ENCODE measurements at regions of chr1 and their contacts with region 1.

Region 1: GRCh38 chr1:165928075-165928731 is 100.8 kb downstream of the UCK2 start:
- DNase-seq: peak; percentile 82
- H3K4me3 Mint-ChIP-seq: no peak overlapping the region
- H3K27ac Mint-ChIP-seq: no peak overlapping the region
- H3K4me1 Mint-ChIP-seq: no peaks in the 10 kb centered on the region
- H3K27me3 Mint-ChIP-seq: no peaks in the 10 kb centered on the region
- CTCF ChIP-seq: peak; percentile 78

Region 2: GRCh38 chr1:165717918-165718515 is 210.2 kb before region 1 on chr1:
- CTCF ChIA-PET with region 1: interaction called, 19 read pairs
- POLR2A ChIA-PET with region 1: no interaction called
- intact Hi-C with region 1: no loop called
- DNase-seq: peak; percentile 80
- H3K4me3 Mint-ChIP-seq: no peak overlapping the region
- H3K27ac Mint-ChIP-seq: no peak overlapping the region
- H3K4me1 Mint-ChIP-seq: no peaks in the 10 kb centered on the region
- H3K27me3 Mint-ChIP-seq: no peaks in the 10 kb centered on the region
- CTCF ChIP-seq: peak; percentile 87

Region 3: GRCh38 chr1:165875171-165875570 is 53.0 kb before region 1 on chr1:
- CTCF ChIA-PET with region 1: no interaction called
- POLR2A ChIA-PET with region 1: no interaction called
- intact Hi-C with region 1: no loop called
- DNase-seq: no peak
- H3K4me3 Mint-ChIP-seq: no peak overlapping the region
- H3K27ac Mint-ChIP-seq: peak overlapping the region; percentile 62
- H3K4me1 Mint-ChIP-seq: peaks cover 32% of the 10 kb centered on the region
- H3K27me3 Mint-ChIP-seq: no peaks in the 10 kb centered on the region
- CTCF ChIP-seq: no peak

Region 4: GRCh38 chr1:165949335-165950130 is 21.3 kb after region 1 on chr1:
- CTCF ChIA-PET with region 1: interaction called, 35 read pairs
- POLR2A ChIA-PET with region 1: no interaction called
- intact Hi-C with region 1: no loop called
- DNase-seq: peak; percentile 52
- H3K4me3 Mint-ChIP-seq: no peak overlapping the region
- H3K27ac Mint-ChIP-seq: no peak overlapping the region
- H3K4me1 Mint-ChIP-seq: no peaks in the 10 kb centered on the region
- H3K27me3 Mint-ChIP-seq: peaks cover 18% of the 10 kb centered on the region
- CTCF ChIP-seq: no peak

Region 5: GRCh38 chr1:165974598-165975131 is 46.5 kb after region 1 on chr1:
- CTCF ChIA-PET with region 1: no interaction called
- POLR2A ChIA-PET with region 1: no interaction called
- intact Hi-C with region 1: no loop called
- DNase-seq: no peak
- H3K4me3 Mint-ChIP-seq: no peak overlapping the region
- H3K27ac Mint-ChIP-seq: no peak overlapping the region
- H3K4me1 Mint-ChIP-seq: no peaks in the 10 kb centered on the region
- H3K27me3 Mint-ChIP-seq: no peaks in the 10 kb centered on the region
- CTCF ChIP-seq: no peak

Region 6: DNA sequence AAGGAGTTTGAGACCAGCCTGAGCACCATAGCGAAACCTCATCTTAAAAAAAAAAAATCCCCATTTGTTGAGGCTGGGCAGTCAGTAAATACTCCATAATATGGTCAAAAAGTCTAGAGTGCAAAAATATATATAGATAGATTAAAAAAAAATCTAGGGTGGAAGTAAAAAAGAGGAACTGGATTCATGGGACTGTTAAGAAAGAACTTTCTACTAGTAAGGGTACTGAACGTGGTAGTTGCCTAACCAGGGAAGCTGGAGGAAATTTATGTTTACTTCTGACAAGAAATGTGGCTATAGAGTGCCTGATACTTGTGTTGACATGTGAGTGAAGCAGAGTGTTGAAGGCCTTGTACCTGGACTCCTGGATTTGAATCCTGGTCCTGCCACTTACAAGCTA is 504.5 kb after region 1 on chr1:
- CTCF ChIA-PET with region 1: interaction called, 79 read pairs
- POLR2A ChIA-PET with region 1: no interaction called
- intact Hi-C with region 1: loop called (anchors 1 kb)
- DNase-seq: no peak
- H3K4me3 Mint-ChIP-seq: no peak overlapping the region
- H3K27ac Mint-ChIP-seq: no peak overlapping the region
- H3K4me1 Mint-ChIP-seq: no peaks in the 10 kb centered on the region
- H3K27me3 Mint-ChIP-seq: no peaks in the 10 kb centered on the region
- CTCF ChIP-seq: no peak

Region 7: GRCh38 chr1:166838766-166839599 is 910.8 kb after region 1 on chr1 and contains the start of gene POGK:
- CTCF ChIA-PET with region 1: interaction called, 3 read pairs
- POLR2A ChIA-PET with region 1: no interaction called
- intact Hi-C with region 1: loop called (anchors 10 kb)
- DNase-seq: peak; percentile 95
- H3K4me3 Mint-ChIP-seq: peak within 1 kb of the TSS; percentile 90
- H3K27ac Mint-ChIP-seq: peak within 1 kb of the TSS; percentile 96
- H3K4me1 Mint-ChIP-seq: peaks cover 47% of the 10 kb centered on the region
- H3K27me3 Mint-ChIP-seq: no peaks in the 10 kb centered on the region
- CTCF ChIP-seq: no peak
- total RNA-seq, gene POGK: 55.9 and 71.8 TPM in 2 replicates

Measured in MCF 10A (cell line).